Dendritic cell treated with granulocyte-macrophage colony-stimulating factor and Interleukin-4, amounts not matched to agents 40 ng/mL and 50 ng/mL, for 4 days (primary cell): ENCODE measurements at regions of chr3 and their contacts with region 1.

Region 1: DNA sequence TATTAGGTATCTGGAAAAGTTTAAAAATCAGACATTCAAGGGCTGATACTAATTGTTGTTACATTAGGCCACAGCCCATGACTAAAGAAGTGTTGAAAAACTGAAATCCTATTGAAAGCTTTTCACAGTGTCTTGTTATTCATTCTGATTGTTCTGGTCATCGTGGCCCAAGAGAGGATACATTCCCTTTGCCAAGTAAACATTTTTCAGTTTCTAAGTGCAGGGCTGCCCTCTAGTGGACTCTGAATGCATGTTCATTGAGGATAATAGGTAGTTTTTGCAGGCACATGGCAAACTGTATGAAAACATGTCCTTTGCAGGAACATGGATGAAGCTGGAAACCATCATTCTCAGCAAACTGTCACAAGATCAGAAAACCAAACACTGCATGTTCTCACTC is 181.1 kb downstream of the MYRIP start:
- H3K4me3 Mint-ChIP-seq: no peak overlapping the region
- H3K27ac Mint-ChIP-seq: no peak overlapping the region
- H3K4me1 Mint-ChIP-seq: no peaks in the 10 kb centered on the region
- H3K27me3 Mint-ChIP-seq: no peaks in the 10 kb centered on the region

Region 2: DNA sequence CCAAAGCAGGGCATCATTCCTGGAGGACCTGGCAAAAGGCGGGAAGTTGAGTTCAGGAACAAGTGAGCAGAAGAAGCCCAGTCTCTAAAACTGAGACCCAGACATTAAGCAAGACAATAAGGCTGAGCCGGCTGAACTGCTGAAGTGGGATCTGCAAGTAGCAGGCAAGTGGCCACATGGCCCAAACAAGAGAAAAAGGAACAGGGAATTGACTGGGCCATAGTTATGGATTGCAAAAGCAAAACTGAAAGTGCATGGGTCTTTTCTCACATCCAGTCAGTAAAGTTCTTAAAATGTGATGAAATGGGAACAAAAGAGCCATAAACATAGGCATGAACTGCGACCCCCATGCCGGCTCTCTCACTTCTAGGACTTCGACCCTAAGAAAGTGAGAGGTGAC is 1040.0 kb before region 1 on chr3:
- intact Hi-C with region 1: no loop called
- H3K4me3 Mint-ChIP-seq: no peak overlapping the region
- H3K27ac Mint-ChIP-seq: peak overlapping the region; percentile 81
- H3K4me1 Mint-ChIP-seq: peaks cover 9% of the 10 kb centered on the region
- H3K27me3 Mint-ChIP-seq: no peaks in the 10 kb centered on the region

Region 3: DNA sequence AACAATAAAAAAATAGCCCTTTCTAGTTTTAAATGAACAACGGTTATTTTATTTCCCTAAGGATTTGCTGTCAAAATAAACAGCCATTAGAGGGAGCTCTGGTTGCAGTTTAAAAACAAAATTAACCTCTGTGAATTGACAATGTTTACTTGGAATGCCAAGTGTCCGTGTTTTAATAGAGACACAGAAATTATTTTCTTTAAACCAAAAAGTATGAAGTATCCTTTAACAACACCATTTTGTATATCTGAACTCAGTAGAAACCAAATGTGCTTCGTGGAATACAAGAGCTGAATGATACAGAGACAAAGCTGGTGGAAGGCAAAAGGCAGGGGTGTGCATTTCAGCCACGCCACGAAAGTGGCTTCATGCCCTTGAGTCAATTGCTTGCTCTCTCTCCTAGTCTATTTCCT is 448.6 kb before region 1 on chr3:
- intact Hi-C with region 1: loop called (anchors 5 kb)
- H3K4me3 Mint-ChIP-seq: no peak overlapping the region
- H3K27ac Mint-ChIP-seq: no peak overlapping the region
- H3K4me1 Mint-ChIP-seq: no peaks in the 10 kb centered on the region
- H3K27me3 Mint-ChIP-seq: no peaks in the 10 kb centered on the region

Region 4: GRCh38 chr3:39707314-39707909 is 283.1 kb before region 1 on chr3:
- intact Hi-C with region 1: loop called (anchors 5 kb)
- H3K4me3 Mint-ChIP-seq: no peak overlapping the region
- H3K27ac Mint-ChIP-seq: no peak overlapping the region
- H3K4me1 Mint-ChIP-seq: no peaks in the 10 kb centered on the region
- H3K27me3 Mint-ChIP-seq: no peaks in the 10 kb centered on the region

Region 5: DNA sequence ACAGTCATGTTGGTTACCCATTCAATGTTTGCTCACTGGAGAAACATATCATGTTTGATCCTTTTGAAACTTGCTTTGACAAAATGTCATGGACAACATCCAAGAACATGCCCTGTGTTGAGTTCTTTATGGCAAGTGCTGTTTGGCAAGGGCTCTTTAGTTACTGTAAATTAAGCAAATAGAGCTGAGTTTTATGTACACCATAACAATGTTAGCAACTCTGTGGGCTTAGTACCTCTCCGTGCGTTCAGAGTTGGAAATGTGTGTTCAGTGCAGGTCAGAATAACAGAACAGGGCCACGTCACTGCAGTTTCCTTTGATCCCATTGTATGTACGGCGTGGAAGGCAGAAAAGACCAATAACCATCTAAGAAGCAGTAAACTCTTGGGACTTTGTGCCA is 48.6 kb before region 1 on chr3:
- intact Hi-C with region 1: no loop called
- H3K4me3 Mint-ChIP-seq: no peak overlapping the region
- H3K27ac Mint-ChIP-seq: no peak overlapping the region
- H3K4me1 Mint-ChIP-seq: no peaks in the 10 kb centered on the region
- H3K27me3 Mint-ChIP-seq: no peaks in the 10 kb centered on the region